Dorsolateral prefrontal cortex (tissue), 120 donors: ENCODE measurements at regions of chr5 and their contacts with region 1.

Region 1: DNA sequence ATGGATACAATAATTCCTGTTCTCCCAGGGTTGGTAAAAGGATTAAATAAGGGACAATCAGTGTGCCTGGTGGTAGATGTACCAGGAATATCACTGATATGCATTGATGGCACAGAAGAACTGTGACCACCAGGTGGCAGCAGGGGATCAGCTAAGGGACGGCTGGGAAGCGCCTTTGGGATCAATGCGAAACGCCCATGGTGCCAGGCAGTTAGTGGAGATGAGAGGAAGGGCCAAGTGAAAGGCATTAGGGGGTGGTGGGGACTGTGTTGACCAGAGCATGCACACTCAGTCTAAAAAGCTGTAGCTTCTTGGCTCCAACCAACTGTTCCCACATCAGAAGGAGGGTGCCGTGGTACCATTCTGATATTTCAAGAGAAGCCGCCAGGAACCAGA is 55.6 kb downstream of the ARHGEF37 start:
- DNase-seq: peak in 8 of 10 donors; percentile 35 to 95 (median 84)
- H3K4me3 ChIP-seq: no peak overlapping the region
- H3K27ac ChIP-seq: peak overlapping the region in 1 of 59 donors; percentile 12
- H3K27me3 ChIP-seq: no peaks in the 10 kb centered on the region
- CTCF ChIP-seq: peak; percentile 62 to 96 (median 84)

Region 2: DNA sequence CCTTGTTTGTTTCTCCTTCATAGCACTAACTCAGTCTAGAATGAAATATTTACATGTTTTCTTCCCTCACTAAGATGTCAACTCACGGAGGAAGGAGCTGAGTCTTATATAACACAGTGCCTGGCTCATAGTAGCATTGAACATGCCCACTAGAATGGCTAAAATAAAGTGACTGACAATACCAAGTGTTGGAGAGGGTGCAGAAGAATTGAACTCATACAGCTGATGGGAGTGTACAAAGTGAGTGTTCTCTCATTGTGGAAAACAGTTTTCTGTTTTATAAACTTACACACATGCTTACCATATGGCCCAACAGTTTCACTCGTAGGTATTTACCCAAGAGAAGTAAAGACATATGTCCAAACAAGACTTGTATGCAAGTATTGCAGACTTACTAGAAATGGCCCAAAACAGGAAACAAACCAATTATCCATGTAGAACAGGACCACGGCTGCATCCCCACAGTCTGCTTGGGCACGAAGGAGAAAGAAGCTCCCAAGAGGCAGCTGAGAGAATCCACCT is 180.8 kb after region 1 on chr5:
- intact Hi-C with region 1: no loop called
- DNase-seq: no peak
- H3K4me3 ChIP-seq: no peak overlapping the region
- H3K27ac ChIP-seq: no peak overlapping the region
- H3K27me3 ChIP-seq: no peaks in the 10 kb centered on the region
- CTCF ChIP-seq: no peak

Region 3: GRCh38 chr5:149828161-149828884 is 191.5 kb after region 1 on chr5:
- intact Hi-C with region 1: loop called (anchors 1 to 5 kb)
- DNase-seq: peak; percentile 64 to 93 (median 83)
- H3K4me3 ChIP-seq: no peak overlapping the region
- H3K27ac ChIP-seq: peak overlapping the region in 9 of 59 donors; percentile 4 to 44 (median 16)
- H3K27me3 ChIP-seq: no peaks in the 10 kb centered on the region
- CTCF ChIP-seq: peak; percentile 76 to 97 (median 92)

Region 4: DNA sequence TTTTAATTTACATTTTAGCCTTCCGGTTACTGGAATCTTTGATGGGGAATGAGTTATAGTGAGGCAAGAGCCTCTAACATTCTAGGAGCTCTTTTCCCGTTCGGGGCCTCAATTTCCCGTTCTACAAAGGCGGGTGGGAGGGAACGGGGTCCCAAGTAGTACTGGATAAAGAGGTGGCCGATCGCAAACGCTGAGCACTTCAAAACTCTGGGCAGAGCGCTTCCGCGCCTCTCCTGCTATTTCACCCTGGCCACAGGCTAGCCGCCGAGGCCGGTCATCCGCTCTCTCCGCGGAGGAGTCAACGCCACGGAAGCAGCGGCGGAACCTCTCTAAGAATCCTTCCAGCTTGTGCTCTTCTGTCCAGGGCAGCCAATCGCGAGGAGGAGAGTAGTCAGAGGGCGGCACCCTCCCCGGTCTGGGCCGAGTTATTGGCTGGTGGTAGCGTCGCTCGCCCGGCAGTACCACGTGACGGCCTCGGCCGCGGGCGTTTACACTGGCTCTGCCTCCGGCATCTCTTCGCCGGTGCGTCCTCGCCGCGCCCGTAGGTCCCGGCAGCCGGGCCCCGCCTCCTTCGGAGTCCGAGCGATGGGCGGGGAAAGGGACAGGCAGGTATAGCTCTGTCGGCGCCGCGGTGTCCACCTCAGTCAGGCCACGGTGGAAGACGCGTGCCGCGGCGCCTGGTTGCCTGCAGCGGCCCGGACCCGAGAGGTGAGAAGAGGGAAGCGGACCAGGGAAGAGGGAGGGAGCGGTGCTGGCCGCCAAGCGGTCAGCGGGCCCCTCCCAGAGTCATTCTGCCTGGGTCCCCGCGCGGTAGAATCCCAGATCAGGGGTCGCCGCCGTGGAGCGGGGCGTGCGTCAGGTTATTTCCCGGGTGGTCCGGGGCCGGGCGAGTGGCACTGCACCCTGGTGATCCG is 323.7 kb after region 1 on chr5 and contains the start of gene SLC26A2:
- intact Hi-C with region 1: loop called in 1 of 2 experiments (anchors 10 kb)
- DNase-seq: peak; percentile 96 to 100 (median 98)
- H3K4me3 ChIP-seq: peak within 1 kb of the TSS; percentile 70 to 99 (median 90)
- H3K27ac ChIP-seq: peak within 1 kb of the TSS; percentile 41 to 96 (median 84)
- H3K27me3 ChIP-seq: no peaks in the 10 kb centered on the region
- CTCF ChIP-seq: peak in 38 of 56 donors; percentile 4 to 65 (median 32)
- total RNA-seq, gene SLC26A2: 2.4 to 17.4 (median 6.9) TPM